ENCODE measurements at regions of chr2 and their contacts with region 1.

Region 1: DNA sequence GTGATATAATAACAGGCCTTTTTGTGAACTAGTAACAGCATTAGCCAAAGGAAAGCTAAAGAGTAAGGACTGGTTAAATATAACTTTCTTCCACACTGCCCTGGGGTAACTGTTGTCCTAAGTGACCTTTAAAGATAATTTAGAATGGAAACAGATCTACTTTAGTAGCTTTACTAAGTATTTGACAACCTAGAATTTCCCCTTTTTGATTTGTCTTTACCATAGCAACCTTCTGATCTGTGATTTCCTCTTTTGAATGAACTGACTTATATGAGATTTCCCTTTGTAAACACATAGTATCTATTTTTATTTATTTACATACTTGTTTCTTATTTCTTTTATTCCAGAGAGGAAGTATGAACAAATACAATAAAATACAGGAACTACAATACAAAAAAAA is 10.5 kb upstream of the KLF7 start:
- DNase-seq: no peak
- H3K4me3 ChIP-seq: no peak overlapping the region
- H3K27ac ChIP-seq: no peak overlapping the region
- H3K4me1 ChIP-seq: peaks cover 0 to 8% (median 0%) of the 10 kb centered on the region in 4 donors
- H3K27me3 ChIP-seq: no peaks in the 10 kb centered on the region
- CTCF ChIP-seq: no peak
- EP300 ChIP-seq: no peak
- POLR2A ChIP-seq: no peak

Region 2: GRCh38 chr2:206647985-206648384 is 528.3 kb before region 1 on chr2:
- in situ Hi-C with region 1: no loop called
- intact Hi-C with region 1: no loop called
- DNase-seq: no peak
- H3K4me3 ChIP-seq: no peak overlapping the region
- H3K27ac ChIP-seq: no peak overlapping the region
- H3K4me1 ChIP-seq: no peaks in the 10 kb centered on the region
- H3K27me3 ChIP-seq: peaks cover 3% of the 10 kb centered on the region
- CTCF ChIP-seq: no peak
- EP300 ChIP-seq: no peak
- POLR2A ChIP-seq: no peak

Region 3: DNA sequence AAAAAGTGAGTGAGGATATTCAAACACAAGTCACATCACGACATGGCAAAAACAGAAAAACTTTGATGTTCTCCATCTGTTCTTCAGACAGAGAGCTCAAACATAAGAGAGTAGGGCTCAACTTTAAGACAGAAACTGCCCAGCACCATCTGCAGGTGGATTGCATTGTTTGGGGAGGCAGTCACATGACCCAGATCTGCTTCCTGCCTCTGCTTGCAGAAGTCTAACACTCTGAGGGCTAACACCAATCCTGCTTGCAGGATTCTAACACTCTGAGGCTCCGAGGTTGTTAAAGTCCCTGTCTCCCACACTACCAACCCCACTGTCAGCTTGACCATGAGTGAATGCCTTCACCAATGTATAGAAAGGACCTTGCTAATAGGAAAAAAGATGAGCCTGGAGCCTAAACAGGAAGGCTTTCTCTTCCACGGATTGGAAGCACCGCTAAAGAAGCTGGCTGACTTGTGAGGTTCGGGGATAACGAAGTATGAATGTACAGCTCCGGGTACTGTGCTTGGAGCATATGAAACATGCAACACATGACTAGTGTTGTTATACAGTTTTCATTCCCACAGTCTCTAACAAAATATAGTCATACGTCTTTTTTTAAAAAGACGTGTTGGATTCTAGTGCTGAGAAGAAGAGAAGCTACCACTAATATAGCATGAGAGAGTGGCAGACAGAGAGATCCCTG is 176.9 kb after region 1 on chr2:
- in situ Hi-C with region 1: no loop called
- intact Hi-C with region 1: loop called (anchors 5 kb)
- DNase-seq: no peak
- H3K4me3 ChIP-seq: no peak overlapping the region
- H3K27ac ChIP-seq: no peak overlapping the region
- H3K4me1 ChIP-seq: no peaks in the 10 kb centered on the region
- H3K27me3 ChIP-seq: no peaks in the 10 kb centered on the region
- CTCF ChIP-seq: no peak
- EP300 ChIP-seq: no peak
- POLR2A ChIP-seq: no peak